ENCODE measurements at regions of chr14 and their contacts with region 1.

Region 1: GRCh38 chr14:75560962-75561432 is 17.4 kb upstream of the FLVCR2 start:
- DNase-seq: peak; percentile 52
- H3K4me3 Mint-ChIP-seq: no peak overlapping the region
- H3K27ac Mint-ChIP-seq: peak overlapping the region; percentile 75
- H3K4me1 Mint-ChIP-seq: peaks cover 68% of the 10 kb centered on the region
- H3K27me3 Mint-ChIP-seq: no peaks in the 10 kb centered on the region

Region 2: GRCh38 chr14:75487155-75487671 is 73.8 kb before region 1 on chr14:
- CTCF ChIA-PET with region 1: interaction called, 24 read pairs
- POLR2A ChIA-PET with region 1: interaction called, 7 read pairs
- DNase-seq: peak; percentile 40
- H3K4me3 Mint-ChIP-seq: no peak overlapping the region
- H3K27ac Mint-ChIP-seq: peak overlapping the region; percentile 61
- H3K4me1 Mint-ChIP-seq: peaks cover 39% of the 10 kb centered on the region
- H3K27me3 Mint-ChIP-seq: no peaks in the 10 kb centered on the region

Region 3: DNA sequence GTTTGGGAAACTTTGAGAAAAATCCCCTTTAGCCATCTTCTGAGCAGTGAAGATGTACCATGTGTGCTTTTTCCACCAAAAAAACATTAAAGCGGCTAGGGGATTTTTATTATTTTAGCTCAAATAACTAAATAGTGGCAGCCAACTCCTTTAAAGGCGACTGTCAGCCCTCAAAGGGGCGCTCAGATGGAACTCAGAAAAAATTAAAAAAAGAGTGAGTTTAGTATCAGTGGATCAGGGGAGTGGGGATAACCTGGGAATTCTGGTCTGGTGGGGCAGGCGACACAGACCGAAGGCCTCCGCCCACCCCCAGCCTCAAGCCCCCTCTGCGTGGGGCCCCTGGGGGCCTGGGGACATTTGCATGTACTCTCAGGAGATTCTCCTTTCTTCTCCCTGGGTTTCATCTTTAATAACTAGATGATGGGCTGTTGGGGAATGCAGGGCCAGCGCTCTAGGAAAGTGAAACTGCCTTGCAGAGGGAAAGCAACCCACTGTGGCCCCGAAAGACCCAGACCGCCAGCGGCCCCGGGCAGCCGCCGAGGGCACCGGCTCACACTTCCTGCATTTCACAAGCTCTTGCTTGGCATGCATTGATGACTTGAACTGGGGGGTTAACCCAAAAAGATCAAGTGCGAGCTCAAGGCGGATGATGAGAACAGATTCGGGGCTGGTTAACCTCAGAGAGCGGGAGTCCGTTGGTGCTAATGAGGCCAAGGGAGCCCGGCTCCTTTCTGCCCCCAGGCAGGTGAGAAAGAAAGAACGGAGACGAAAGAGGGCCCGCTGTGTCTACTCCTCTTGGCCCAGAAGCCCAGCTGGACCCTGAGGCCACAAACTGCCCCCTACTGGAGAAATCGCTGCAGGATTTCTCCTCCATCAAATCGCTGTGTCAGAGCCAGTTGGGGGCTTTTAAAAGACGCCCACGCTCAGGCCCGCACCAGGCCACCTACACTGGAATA is 46.0 kb before region 1 on chr14:
- CTCF ChIA-PET with region 1: interaction called, 22 read pairs
- POLR2A ChIA-PET with region 1: interaction called, 6 read pairs
- DNase-seq: peak; percentile 70
- H3K4me3 Mint-ChIP-seq: peak overlapping the region; percentile 59
- H3K27ac Mint-ChIP-seq: peak overlapping the region; percentile 85
- H3K4me1 Mint-ChIP-seq: peaks cover 45% of the 10 kb centered on the region
- H3K27me3 Mint-ChIP-seq: no peaks in the 10 kb centered on the region

Region 4: GRCh38 chr14:75542588-75543091 is 18.4 kb before region 1 on chr14:
- CTCF ChIA-PET with region 1: interaction called, 41 read pairs
- POLR2A ChIA-PET with region 1: interaction called, 14 read pairs
- DNase-seq: peak; percentile 82
- H3K4me3 Mint-ChIP-seq: peak overlapping the region; percentile 57
- H3K27ac Mint-ChIP-seq: peak overlapping the region; percentile 99
- H3K4me1 Mint-ChIP-seq: peaks cover 77% of the 10 kb centered on the region
- H3K27me3 Mint-ChIP-seq: no peaks in the 10 kb centered on the region

Region 5: DNA sequence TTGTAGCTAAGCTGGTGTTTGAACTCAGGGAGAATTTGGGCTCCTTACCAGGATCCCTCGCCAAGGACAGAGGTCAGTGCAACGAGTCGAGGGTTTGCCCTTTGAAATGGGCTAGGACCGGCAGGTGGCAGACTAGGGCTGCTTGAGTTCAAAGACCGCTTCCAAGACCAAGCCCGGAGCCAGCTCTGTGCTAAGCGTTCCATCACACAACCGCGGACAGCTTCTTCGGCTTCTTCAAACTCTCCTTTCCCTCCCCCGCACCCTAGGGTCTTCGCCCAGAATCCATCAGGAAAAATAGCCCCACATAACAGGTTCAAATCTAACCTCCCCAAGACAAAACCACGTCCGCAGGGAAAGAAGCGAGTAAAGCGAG is 16.7 kb after region 1 on chr14:
- CTCF ChIA-PET with region 1: interaction called, 22 read pairs
- POLR2A ChIA-PET with region 1: interaction called, 7 read pairs
- DNase-seq: peak; percentile 79
- H3K4me3 Mint-ChIP-seq: peak overlapping the region; percentile 81
- H3K27ac Mint-ChIP-seq: peak overlapping the region; percentile 13
- H3K4me1 Mint-ChIP-seq: peaks cover 22% of the 10 kb centered on the region
- H3K27me3 Mint-ChIP-seq: no peaks in the 10 kb centered on the region

Measured in activated CD4-positive, alpha-beta memory T cell treated with anti-CD3 and anti-CD28 coated beads, Interleukin-2, amount 10 ng/mL, durations not matched to agents 7 days and 5 days (primary cell).